Mucosa of descending colon (tissue), 3 donors: ENCODE measurements at regions of chr2 and their contacts with region 1.

Region 1: DNA sequence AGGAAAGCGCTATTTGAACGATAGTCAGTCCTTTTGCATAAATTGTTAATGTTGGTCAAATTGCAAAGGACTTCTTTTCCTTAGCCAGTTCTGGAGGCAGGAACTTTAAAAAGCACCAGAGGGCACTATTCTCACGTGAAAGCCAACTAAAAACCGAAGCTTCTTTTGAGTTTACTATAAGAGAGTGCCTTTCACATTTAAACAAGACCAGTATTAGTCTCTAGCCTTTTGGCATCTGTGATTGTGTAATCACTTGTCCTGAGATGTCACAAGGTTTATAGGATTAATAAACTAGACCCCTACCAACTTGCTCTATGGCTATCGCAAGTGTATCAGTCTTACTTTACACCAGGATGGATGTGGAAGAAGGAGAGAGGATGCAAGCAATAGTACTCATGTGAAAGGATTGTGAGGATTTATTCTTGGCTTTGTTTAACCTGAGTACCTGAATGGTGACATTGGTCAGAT is 14.4 kb upstream of the STAT4 start:
- DNase-seq: peak in 1 of 3 donors; percentile 49
- ATAC-seq: peak; percentile 73
- H3K4me3 ChIP-seq: no peak overlapping the region
- H3K4me1 ChIP-seq: peaks cover 18% of the 10 kb centered on the region
- CTCF ChIP-seq: peak; percentile 28

Region 2: DNA sequence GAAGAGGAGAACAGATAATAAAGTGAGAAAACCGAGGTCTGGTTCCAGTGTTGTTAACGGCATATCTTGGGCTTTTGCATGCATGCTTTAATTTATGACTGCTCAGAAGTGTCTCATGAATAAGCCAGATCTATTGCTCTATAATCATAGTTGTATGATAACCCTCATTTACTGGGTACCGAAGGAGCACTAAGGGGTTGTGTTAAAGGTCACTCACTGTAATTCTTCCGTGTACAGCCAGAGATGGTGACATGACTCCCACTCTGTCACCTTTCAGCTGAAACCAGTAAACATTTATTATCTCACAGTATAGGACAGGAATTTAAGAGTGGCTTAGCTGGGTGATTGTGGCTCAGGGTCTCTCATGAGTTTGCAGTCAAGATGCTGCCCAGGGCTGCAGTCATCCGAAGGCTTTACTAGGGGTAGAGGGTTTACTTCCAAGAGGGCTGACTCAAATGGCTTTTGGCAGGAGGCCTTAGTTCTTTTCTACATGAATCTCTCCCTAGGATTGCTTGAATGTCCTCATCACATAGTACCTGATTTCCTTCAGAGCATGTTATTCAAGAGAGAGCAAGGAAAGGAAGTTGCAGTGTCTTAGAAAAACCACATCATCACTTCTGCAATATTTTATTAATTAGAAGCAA is 409.3 kb before region 1 on chr2:
- intact Hi-C with region 1: no loop called
- DNase-seq: no peak
- ATAC-seq: peak; percentile 63
- H3K4me3 ChIP-seq: no peak overlapping the region
- H3K4me1 ChIP-seq: no peaks in the 10 kb centered on the region
- CTCF ChIP-seq: no peak

Region 3: DNA sequence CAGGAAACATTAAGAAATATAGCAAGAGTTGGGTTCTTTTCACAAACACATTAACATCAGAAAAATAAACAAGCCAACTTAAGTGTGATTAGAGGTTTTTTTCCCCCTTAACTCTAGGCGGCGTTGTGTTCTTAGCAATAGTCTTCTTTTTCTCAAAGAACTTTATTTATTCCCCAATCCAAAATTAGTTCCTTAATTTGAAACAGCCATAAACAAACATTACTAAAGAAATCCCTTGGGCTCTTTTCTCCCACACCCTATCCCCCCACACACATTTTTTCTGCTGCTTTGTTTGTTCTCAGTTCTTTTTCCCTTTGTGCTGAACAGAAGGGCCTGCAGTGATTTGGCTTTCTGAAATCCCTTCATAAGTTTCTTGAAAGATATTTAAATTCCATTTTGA is 66.8 kb after region 1 on chr2:
- intact Hi-C with region 1: no loop called
- DNase-seq: no peak
- ATAC-seq: no peak
- H3K4me3 ChIP-seq: no peak overlapping the region
- H3K4me1 ChIP-seq: no peaks in the 10 kb centered on the region
- CTCF ChIP-seq: no peak

Region 4: DNA sequence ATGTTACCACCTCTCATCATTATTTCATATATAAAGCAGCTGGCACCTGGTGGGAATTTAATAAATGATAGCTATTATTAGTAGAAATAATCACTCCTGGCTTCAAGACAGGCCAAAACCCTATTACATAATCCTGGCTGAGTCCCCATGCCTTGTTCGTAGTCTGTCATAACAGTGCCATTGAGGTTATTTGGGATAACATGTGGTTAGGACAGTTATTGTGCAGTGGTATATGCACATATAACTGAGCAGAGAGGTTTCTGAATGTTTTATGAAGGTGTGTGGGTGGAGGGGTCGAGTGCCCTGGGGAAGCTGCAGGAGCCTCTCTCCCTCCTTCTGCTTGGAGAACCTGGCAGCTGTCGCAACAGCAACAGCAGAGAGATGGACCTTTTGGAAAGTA is 350.3 kb after region 1 on chr2:
- intact Hi-C with region 1: loop called (anchors 5 to 10 kb)
- DNase-seq: no peak
- ATAC-seq: no peak
- H3K4me3 ChIP-seq: no peak overlapping the region
- H3K4me1 ChIP-seq: no peaks in the 10 kb centered on the region
- CTCF ChIP-seq: no peak